ENCODE measurements at regions of chr7 and their contacts with region 1.

Region 1: DNA sequence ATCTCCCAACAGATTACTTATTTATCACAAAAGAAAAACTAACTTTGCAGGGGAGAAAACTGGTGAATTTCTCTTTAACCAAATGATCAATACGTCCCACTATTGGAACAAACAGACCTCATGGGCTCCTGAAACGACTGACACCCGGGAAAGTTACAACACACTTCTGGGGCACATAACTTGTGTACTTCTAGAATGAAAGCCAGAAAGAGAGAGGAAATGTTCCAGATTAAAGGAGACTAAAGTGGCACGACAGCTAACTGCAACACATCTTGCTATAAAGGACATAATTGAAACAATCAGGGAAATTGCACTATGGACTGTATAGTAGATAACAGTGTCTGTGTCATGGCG is 14.7 kb upstream of the TPST1 start:
- DNase-seq: no peak
- ATAC-seq: no peak
- H3K4me3 ChIP-seq: no peak overlapping the region
- H3K27ac ChIP-seq: no peak overlapping the region
- H3K4me1 ChIP-seq: no peaks in the 10 kb centered on the region
- H3K27me3 ChIP-seq: no peaks in the 10 kb centered on the region
- CTCF ChIP-seq: no peak

Region 2: GRCh38 chr7:65946895-65947294 is 243.6 kb before region 1 on chr7:
- CTCF ChIA-PET with region 1: no interaction called
- POLR2A ChIA-PET with region 1: no interaction called
- in situ Hi-C with region 1: no loop called
- intact Hi-C with region 1: no loop called
- DNase-seq: peak; percentile 30
- ATAC-seq: no peak; the same call in 1 of the 2 replicates
- H3K4me3 ChIP-seq: no peak overlapping the region
- H3K27ac ChIP-seq: no peak overlapping the region
- H3K4me1 ChIP-seq: no peaks in the 10 kb centered on the region
- H3K27me3 ChIP-seq: no peaks in the 10 kb centered on the region
- CTCF ChIP-seq: no peak

Region 3: DNA sequence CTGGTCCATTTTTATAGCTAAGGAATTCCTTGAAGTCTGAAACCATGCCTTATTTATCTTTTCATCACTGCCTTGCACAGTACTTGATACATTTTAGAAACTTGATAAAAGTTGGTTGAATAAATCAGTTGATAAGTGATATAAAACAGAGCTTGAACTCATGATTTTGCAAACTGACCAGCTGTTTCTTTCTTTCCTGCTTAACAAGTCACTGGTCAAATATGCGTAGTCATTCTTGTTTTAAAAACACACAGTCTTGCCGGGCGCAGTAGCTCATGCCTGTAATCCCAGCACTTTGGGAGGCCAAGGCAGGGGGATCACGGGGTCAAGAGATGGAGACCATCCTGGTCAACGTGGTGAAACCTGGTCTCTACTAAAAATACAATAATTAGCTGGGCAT is 20.9 kb after region 1 on chr7:
- CTCF ChIA-PET with region 1: no interaction called
- POLR2A ChIA-PET with region 1: interaction called, 13 read pairs
- in situ Hi-C with region 1: no loop called
- intact Hi-C with region 1: no loop called
- DNase-seq: no peak
- ATAC-seq: no peak
- H3K4me3 ChIP-seq: no peak overlapping the region
- H3K27ac ChIP-seq: no peak overlapping the region
- H3K4me1 ChIP-seq: peaks cover 9% of the 10 kb centered on the region
- H3K27me3 ChIP-seq: no peaks in the 10 kb centered on the region
- CTCF ChIP-seq: no peak

Region 4: GRCh38 chr7:66627151-66627681 is 436.7 kb after region 1 on chr7:
- CTCF ChIA-PET with region 1: no interaction called
- POLR2A ChIA-PET with region 1: interaction called, 16 read pairs
- in situ Hi-C with region 1: no loop called
- intact Hi-C with region 1: no loop called
- DNase-seq: no peak
- ATAC-seq: no peak
- H3K4me3 ChIP-seq: peak overlapping the region in 1 of 2 experiments; percentile 83; a peak in 2 of 4 replicates
- H3K27ac ChIP-seq: no peak overlapping the region
- H3K4me1 ChIP-seq: peaks cover 4% of the 10 kb centered on the region; the same call in 1 of the 2 replicates
- H3K27me3 ChIP-seq: no peaks in the 10 kb centered on the region
- CTCF ChIP-seq: no peak